ENCODE measurements at regions of chr6 and their contacts with region 1.

Region 1: DNA sequence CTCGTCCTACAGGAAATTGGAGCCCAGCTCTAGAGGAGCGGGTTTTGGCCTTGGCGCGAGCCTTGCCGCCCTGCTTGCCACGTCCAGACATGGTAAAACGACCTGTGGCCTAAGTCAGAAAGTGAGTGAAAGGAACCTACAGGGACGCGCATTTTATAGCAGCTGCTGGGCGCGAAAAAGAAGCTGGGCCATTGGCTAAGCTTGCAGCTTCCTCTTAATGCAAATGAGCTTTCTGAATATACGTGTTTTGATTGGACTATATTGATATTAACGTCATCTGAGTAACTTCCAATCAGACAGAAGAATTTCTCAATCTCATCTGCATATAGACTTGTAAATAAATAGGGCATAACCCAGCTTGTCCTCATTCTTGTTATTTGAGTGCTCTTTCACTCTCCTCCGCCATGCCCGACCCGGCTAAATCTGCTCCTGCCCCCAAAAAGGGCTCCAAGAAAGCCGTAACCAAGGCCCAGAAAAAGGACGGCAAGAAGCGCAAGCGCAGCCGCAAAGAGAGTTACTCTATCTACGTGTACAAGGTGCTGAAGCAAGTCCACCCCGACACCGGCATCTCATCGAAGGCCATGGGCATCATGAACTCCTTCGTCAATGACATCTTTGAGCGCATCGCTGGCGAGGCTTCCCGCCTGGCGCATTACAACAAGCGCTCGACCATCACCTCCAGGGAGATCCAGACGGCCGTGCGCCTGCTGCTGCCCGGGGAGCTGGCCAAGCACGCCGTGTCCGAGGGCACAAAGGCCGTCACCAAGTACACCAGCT is 18.9 kb downstream of the OR2B2 start:
- DNase-seq: peak; percentile 94
- H3K4me3 ChIP-seq: peak overlapping the region; percentile 91
- H3K27ac ChIP-seq: peak overlapping the region; percentile 91
- H3K27me3 ChIP-seq: no peaks in the 10 kb centered on the region
- CTCF ChIP-seq: no peak

Region 2: DNA sequence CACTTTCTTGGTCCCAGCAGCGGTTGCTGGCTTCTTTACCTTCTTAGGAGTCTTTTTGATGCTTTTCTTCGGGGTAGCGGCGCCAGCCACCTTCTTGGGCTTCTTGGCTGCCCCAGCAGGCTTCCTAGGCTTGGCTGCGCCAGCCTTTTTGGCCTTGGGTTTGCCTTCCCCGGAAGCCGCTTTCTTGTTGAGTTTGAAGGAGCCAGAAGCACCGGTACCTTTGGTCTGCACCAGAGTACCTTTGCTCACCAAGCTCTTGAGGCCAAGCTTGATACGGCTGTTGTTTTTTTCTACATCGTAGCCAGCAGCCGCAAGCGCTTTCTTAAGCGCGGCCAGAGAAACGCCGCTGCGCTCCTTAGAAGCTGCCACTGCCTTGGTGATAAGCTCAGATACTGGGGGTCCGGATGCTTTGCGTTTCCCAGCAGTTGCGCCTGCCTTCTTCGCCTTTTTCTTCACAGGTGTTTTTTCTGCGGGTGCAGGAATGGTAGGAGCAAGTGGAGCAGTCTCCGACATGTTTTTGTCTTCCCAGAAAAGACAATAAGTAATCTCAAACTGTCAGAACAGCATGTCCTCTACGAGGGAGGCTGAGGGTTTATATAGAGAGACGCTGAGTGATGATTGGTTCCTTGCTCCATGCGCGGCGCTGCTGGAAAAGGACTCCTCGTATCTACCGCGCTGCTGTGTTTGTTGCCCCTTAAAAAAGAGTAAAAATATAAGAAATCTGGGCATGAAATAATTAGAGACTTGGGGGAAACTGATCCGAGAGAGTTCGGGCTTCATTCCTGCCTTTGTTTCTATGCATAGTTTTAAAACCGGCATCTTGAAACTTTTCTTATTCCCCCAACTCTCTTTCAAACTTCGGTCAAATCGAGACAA is 1658.6 kb before region 1 on chr6:
- CTCF ChIA-PET with region 1: no interaction called
- POLR2A ChIA-PET with region 1: interaction called, 17 read pairs
- DNase-seq: no peak
- H3K4me3 ChIP-seq: peak overlapping the region; percentile 65
- H3K27ac ChIP-seq: peak overlapping the region; percentile 91
- H3K27me3 ChIP-seq: no peaks in the 10 kb centered on the region
- CTCF ChIP-seq: no peak

Region 3: DNA sequence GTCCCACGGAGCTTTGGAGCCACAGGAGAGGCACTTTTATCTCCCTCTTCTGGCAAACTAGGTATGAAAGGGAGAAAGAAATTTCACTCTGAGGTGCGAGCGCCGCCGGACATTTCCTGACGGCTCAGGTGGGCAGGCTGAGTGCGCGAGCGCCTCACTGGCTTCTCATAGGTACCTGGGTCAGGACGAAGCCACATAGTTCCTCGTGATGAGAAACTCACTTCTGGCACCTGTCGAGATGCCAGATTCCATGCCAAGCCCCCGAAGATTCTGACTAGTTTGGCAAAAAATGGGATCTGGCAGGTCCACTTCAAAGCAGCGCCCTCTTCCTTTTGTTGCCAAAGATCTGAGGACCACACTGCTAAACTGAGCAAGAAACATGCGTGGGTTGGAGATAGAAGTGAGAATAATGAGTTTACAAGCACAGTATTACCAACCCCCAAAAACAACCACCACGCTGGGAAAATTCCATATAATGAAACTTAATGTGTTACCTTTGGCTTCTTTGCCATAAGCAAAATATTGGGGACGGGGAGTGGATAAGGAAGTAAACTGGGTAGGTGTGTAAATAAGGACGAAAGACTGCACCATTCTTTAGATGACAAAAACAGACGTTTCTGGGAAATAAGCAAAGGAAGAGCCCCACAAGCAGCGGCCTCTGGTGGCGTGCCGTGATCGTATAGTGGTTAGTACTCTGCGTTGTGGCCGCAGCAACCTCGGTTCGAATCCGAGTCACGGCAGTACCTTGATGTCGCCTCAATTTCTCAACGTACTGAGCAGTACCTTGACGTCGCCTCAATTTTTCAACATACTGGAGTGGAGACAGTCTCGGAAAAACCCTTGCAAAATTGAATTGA is 735.6 kb before region 1 on chr6:
- CTCF ChIA-PET with region 1: interaction called, 22 read pairs
- POLR2A ChIA-PET with region 1: no interaction called
- DNase-seq: no peak
- H3K4me3 ChIP-seq: peak overlapping the region; percentile 62
- H3K27ac ChIP-seq: no peak overlapping the region
- H3K27me3 ChIP-seq: no peaks in the 10 kb centered on the region
- CTCF ChIP-seq: peak; percentile 62

Region 4: DNA sequence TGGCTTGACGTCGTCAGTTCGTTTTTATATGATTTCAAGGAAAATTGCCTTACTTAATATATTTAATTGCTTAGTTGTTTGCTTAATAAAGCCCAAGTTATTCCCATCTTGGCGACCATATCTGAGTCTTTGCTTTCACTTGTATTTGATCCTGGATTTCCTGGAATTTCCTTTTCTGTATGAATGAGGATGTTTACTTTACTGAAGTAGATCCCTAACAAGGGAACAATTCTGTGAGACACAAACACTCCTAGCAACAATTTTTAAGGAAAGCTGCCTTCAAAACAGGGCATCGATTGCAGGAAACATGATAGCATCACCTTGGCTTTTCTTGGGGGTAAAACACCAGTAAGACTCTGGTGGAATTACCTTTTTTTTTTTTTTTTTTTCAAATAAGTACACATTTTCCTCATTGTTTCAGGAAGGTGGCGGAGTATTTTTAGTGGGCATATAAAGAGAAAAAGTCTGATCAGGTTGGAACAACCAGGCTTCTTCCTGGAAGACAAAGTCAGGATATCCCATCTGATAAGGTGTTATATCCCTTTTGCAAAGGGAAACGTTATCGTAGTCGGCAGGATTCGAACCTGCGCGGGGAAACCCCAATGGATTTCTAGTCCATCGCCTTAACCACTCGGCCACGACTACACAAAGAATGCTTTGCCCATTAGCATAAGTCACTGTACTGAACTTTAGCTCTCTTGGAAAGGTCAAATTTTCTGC is 351.9 kb before region 1 on chr6:
- CTCF ChIA-PET with region 1: no interaction called
- POLR2A ChIA-PET with region 1: no interaction called
- DNase-seq: no peak
- H3K4me3 ChIP-seq: no peak overlapping the region
- H3K27ac ChIP-seq: no peak overlapping the region
- H3K27me3 ChIP-seq: no peaks in the 10 kb centered on the region
- CTCF ChIP-seq: no peak

Region 5: GRCh38 chr6:27642744-27643456 is 250.3 kb before region 1 on chr6:
- CTCF ChIA-PET with region 1: no interaction called
- POLR2A ChIA-PET with region 1: no interaction called
- DNase-seq: no peak
- H3K4me3 ChIP-seq: no peak overlapping the region
- H3K27ac ChIP-seq: no peak overlapping the region
- H3K27me3 ChIP-seq: no peaks in the 10 kb centered on the region
- CTCF ChIP-seq: no peak

Region 6: GRCh38 chr6:27772261-27773001 is 120.8 kb before region 1 on chr6:
- CTCF ChIA-PET with region 1: interaction called, 87 read pairs
- POLR2A ChIA-PET with region 1: interaction called, 4 read pairs
- DNase-seq: peak; percentile 66
- H3K4me3 ChIP-seq: peak overlapping the region; percentile 31; the same call in 1 of the 2 replicates
- H3K27ac ChIP-seq: no peak overlapping the region
- H3K27me3 ChIP-seq: peaks cover 16% of the 10 kb centered on the region
- CTCF ChIP-seq: peak; percentile 99

Region 7: DNA sequence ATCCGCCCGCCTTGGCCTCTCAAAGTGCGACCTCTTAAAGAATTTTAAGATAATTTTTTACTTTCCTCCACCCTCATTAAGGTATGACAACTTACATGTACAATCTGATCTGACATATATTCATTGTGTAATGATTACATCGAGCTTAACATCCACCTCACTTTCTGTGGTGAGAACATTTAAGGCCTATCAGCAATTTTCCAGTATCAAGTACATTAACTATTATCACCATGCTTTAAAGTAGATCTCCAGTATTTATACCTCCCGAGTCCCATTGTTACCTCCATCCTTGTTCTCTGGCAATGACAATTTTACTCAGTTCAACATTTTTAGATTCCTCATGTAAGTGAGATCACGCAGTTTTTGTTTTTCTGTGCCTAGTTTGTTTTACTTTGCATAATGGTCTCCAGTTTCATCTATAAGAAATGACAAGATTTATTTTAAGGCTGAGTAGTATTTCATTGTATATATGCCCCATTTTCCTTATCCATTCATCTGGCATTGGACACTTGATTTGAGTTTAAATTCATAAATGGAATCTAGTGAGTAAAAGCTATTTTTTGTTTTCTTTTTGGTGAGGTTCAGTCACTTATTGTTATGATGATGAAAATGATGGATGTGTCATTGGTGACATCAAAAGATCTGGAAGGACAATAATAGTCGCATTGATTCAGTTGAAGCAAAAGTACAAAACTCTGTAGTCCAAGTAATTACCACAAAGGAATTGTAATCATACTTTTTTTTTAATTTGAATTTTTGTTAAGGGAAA is 68.0 kb before region 1 on chr6:
- CTCF ChIA-PET with region 1: interaction called, 90 read pairs
- POLR2A ChIA-PET with region 1: interaction called, 45 read pairs
- DNase-seq: no peak
- H3K4me3 ChIP-seq: peak overlapping the region; percentile 80
- H3K27ac ChIP-seq: peak overlapping the region; percentile 82
- H3K27me3 ChIP-seq: no peaks in the 10 kb centered on the region
- CTCF ChIP-seq: no peak